Natural killer cell (primary cell): ENCODE measurements at regions of chr2 and their contacts with region 1.

Region 1: GRCh38 chr2:191150600-191151330 is at the start of gene STAT4:
- DNase-seq: peak; percentile 79 to 96
- ATAC-seq: peak; percentile 71 to 90 (median 82)
- H3K4me3 ChIP-seq: peak within 1 kb of the TSS; percentile 63
- H3K4me3 Mint-ChIP-seq: peak within 1 kb of the TSS; percentile 87
- H3K27ac ChIP-seq: peak within 1 kb of the TSS; percentile 92
- H3K27ac Mint-ChIP-seq: peak within 1 kb of the TSS; percentile 95 to 98
- H3K4me1 ChIP-seq: peaks cover 36% of the 10 kb centered on the region
- H3K4me1 Mint-ChIP-seq: peaks cover 79 to 85% of the 10 kb centered on the region in 2 donors
- H3K27me3 ChIP-seq: no peaks in the 10 kb centered on the region
- H3K27me3 Mint-ChIP-seq: no peaks in the 10 kb centered on the region
- CTCF ChIP-seq: no peak
- total RNA-seq, gene STAT4: 264 to 339 (median 304) TPM

Region 2: DNA sequence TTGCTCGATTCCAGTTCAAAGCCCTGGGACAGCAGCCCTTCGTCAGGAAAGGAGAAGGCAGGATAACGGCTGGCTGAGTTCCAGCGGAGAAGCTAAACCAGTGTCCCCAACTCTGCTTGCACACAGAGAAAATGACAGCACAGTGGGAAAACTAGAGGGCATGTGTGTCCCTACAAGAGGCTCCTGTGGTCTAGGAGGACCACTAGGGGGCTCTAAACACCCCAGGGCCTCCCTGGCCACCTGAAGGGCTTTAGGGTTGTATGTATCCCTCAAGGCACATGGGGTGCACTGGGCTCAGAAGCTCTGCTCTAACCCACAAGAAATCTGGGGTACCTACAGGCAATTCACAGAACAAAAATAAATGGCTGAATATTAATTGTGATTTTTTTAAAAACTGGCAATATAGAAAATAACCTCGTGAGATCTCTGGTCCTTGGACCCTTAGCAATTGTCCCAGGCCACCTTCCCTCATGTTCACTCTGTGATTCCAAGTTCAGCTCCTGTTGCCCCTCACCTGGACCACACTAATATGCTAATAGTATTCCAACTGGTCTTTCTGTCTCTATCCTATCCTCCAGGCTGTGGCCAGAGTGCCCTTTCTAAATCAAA is 154.3 kb before region 1 on chr2:
- intact Hi-C with region 1: loop called (anchors 1 kb)
- DNase-seq: peak in 1 of 2 donors; percentile 70
- ATAC-seq: peak; percentile 57 to 85 (median 79)
- H3K4me3 ChIP-seq: no peak overlapping the region
- H3K4me3 Mint-ChIP-seq: no peak overlapping the region
- H3K27ac ChIP-seq: no peak overlapping the region
- H3K27ac Mint-ChIP-seq: peak overlapping the region; percentile 60 to 72
- H3K4me1 ChIP-seq: no peaks in the 10 kb centered on the region
- H3K4me1 Mint-ChIP-seq: peaks cover 8 to 28% of the 10 kb centered on the region in 2 donors
- H3K27me3 ChIP-seq: no peaks in the 10 kb centered on the region
- H3K27me3 Mint-ChIP-seq: no peaks in the 10 kb centered on the region
- CTCF ChIP-seq: peak; percentile 64

Region 3: DNA sequence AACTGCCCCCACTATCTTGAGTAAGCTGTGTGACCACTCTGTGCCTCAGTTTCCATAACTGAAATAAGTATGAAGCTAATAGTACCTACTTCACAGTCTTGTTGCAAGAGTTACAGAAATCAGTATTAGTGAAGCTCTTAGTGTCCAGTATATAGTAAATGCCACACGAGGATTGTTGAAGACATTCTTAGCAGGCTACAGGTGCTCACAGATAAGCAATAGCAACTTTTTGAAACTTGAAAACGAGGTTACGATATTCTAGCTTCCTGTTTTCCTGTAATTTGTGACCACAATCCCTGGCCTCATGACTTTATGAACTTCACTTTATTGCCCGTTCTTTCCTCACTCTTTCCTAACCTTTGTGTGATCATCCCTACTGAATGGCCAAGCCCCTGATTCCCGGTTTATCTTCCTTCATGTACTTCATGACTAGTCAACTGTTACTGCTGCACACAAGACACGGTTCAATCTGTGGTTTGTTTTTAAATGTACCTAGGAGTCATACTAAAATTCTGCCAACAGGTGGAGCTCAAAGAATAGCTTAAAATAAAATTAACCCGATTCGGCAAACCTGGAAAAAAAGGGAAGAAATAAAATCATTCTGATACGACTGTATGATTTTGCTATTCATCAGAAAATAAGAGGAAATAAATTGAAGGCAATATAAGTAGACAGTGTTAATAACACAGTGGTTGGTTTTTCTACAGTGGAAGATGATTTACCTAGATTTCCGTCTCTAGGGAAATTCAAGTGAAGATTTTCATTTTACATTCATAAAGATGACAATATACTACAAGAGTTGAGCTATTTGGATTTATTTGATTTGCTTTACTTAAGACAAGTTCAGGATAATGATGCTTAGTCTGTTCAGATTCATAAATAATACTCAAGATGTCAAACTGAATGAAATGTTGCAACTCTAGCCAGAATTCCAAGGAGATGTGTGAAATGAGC is 98.7 kb before region 1 on chr2:
- intact Hi-C with region 1: loop called (anchors 1 kb)
- DNase-seq: peak in 1 of 2 donors; percentile 78
- ATAC-seq: peak; percentile 48 to 52 (median 49)
- H3K4me3 ChIP-seq: no peak overlapping the region
- H3K4me3 Mint-ChIP-seq: no peak overlapping the region
- H3K27ac ChIP-seq: no peak overlapping the region
- H3K27ac Mint-ChIP-seq: no peak overlapping the region
- H3K4me1 ChIP-seq: peaks cover 32% of the 10 kb centered on the region
- H3K4me1 Mint-ChIP-seq: peaks cover 33 to 42% of the 10 kb centered on the region in 2 donors
- H3K27me3 ChIP-seq: no peaks in the 10 kb centered on the region
- H3K27me3 Mint-ChIP-seq: no peaks in the 10 kb centered on the region
- CTCF ChIP-seq: peak; percentile 83

Region 4: GRCh38 chr2:191114403-191114886 is 36.3 kb before region 1 on chr2:
- intact Hi-C with region 1: loop called (anchors 1 kb)
- DNase-seq: peak; percentile 62 to 74
- ATAC-seq: peak; percentile 57 to 72 (median 62)
- H3K4me3 ChIP-seq: peak overlapping the region; percentile 17
- H3K4me3 Mint-ChIP-seq: peak overlapping the region; percentile 78
- H3K27ac ChIP-seq: peak overlapping the region; percentile 100
- H3K27ac Mint-ChIP-seq: peak overlapping the region; percentile 95 to 98
- H3K4me1 ChIP-seq: peaks cover 33% of the 10 kb centered on the region
- H3K4me1 Mint-ChIP-seq: peaks cover 76% of the 10 kb centered on the region in 2 donors
- H3K27me3 ChIP-seq: no peaks in the 10 kb centered on the region
- H3K27me3 Mint-ChIP-seq: no peaks in the 10 kb centered on the region
- CTCF ChIP-seq: no peak

Region 5: DNA sequence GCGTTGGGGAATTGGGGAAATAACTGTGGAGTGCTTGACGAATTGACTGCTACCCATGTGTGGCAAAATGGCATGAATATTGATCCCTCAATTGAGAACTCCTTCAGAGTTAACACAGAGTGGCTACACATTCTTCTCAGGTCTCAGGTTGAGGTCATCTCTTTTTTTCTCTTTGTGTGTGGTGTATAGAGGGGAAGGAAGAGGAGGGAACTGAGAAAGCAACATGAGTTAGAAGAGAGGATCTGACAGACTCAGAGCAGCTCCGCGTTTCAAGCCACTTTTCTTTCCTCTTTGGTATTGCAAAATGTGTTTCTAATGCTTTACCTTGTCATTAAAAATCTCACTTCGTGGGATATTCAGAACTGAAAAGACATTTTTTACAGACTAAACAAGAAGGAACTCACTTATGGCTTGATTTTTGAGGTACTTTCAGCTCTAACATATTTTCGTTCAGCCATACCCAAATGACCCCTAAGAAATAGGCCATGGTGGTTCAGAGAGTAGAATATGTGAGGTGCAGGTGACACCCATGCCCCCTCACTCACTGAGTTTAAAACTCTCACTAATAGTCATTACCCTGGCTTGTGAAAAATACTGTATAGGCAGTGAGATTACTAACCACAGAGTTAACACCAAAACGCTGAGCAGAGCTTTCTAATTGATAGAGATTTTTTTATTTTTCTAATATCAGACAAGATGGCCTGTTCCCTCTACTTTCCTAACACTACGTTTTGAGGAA is 22.4 kb before region 1 on chr2:
- intact Hi-C with region 1: loop called (anchors 1 kb)
- DNase-seq: peak in 1 of 2 donors; percentile 65
- ATAC-seq: peak; percentile 68 to 86 (median 75)
- H3K4me3 ChIP-seq: peak overlapping the region; percentile 0
- H3K4me3 Mint-ChIP-seq: peak overlapping the region; percentile 71
- H3K27ac ChIP-seq: peak overlapping the region; percentile 86
- H3K27ac Mint-ChIP-seq: peak overlapping the region; percentile 86 to 98
- H3K4me1 ChIP-seq: peaks cover 34% of the 10 kb centered on the region
- H3K4me1 Mint-ChIP-seq: peaks cover 72 to 79% of the 10 kb centered on the region in 2 donors
- H3K27me3 ChIP-seq: no peaks in the 10 kb centered on the region
- H3K27me3 Mint-ChIP-seq: no peaks in the 10 kb centered on the region
- CTCF ChIP-seq: no peak

Region 6: GRCh38 chr2:191311628-191312027 is 160.9 kb after region 1 on chr2:
- intact Hi-C with region 1: no loop called
- DNase-seq: no peak
- ATAC-seq: no peak
- H3K4me3 ChIP-seq: no peak overlapping the region
- H3K4me3 Mint-ChIP-seq: no peak overlapping the region
- H3K27ac ChIP-seq: no peak overlapping the region
- H3K27ac Mint-ChIP-seq: no peak overlapping the region
- H3K4me1 ChIP-seq: no peaks in the 10 kb centered on the region
- H3K4me1 Mint-ChIP-seq: no peaks in the 10 kb centered on the region
- H3K27me3 ChIP-seq: no peaks in the 10 kb centered on the region
- H3K27me3 Mint-ChIP-seq: peaks cover 2 to 20% of the 10 kb centered on the region in 2 donors
- CTCF ChIP-seq: no peak

Region 7: GRCh38 chr2:191677646-191678436 is 527.1 kb after region 1 on chr2 and contains the start of gene NABP1:
- intact Hi-C with region 1: loop called (anchors 5 kb)
- DNase-seq: peak; percentile 98 to 99
- ATAC-seq: peak; percentile 85 to 97 (median 90)
- H3K4me3 ChIP-seq: peak within 1 kb of the TSS; percentile 63
- H3K4me3 Mint-ChIP-seq: peak within 1 kb of the TSS; percentile 98
- H3K27ac ChIP-seq: peak within 1 kb of the TSS; percentile 93
- H3K27ac Mint-ChIP-seq: peak within 1 kb of the TSS; percentile 99
- H3K4me1 ChIP-seq: peaks cover 35% of the 10 kb centered on the region
- H3K4me1 Mint-ChIP-seq: peaks cover 62 to 64% of the 10 kb centered on the region in 2 donors
- H3K27me3 ChIP-seq: no peaks in the 10 kb centered on the region
- H3K27me3 Mint-ChIP-seq: no peaks in the 10 kb centered on the region
- CTCF ChIP-seq: no peak
- total RNA-seq, gene NABP1: 44.5 to 52.2 (median 45.7) TPM